B cell (primary cell): ENCODE measurements at regions of chr21 and their contacts with region 1.

Region 1: GRCh38 chr21:36297921-36298594 is 21.9 kb upstream of the MORC3 start:
- DNase-seq: peak; percentile 92
- ATAC-seq: peak; percentile 88
- H3K4me3 ChIP-seq: peak overlapping the region in 4 of 5 experiments; percentile 5 to 53 (median 29)
- H3K4me3 Mint-ChIP-seq: peak overlapping the region; percentile 80
- H3K27ac ChIP-seq: peak overlapping the region; percentile 94 to 97
- H3K27ac Mint-ChIP-seq: peak overlapping the region; percentile 97
- H3K4me1 ChIP-seq: peaks cover 52 to 71% of the 10 kb centered on the region in 2 donors
- H3K4me1 Mint-ChIP-seq: peaks cover 53% of the 10 kb centered on the region
- H3K27me3 ChIP-seq: no peaks in the 10 kb centered on the region
- H3K27me3 Mint-ChIP-seq: no peaks in the 10 kb centered on the region
- CTCF ChIP-seq: no peak

Region 2: DNA sequence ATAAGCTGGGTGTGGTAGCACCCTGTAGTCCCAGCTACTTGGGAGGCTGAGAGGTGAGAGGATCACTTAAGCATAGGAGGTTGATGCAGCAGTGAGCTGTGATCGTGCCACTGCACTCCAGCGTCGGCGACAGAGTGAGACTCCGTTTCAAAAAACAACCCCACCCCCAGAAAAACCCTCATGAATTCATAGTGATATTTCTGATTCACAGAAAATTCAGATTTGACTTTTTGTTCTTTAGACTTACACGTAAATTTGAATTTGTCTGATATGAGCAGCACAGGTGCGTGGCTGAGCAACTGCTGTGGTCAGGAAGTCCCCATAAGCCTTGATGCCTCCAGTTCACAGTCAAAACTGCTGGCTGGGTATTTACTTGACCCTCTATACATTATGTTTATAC is 12.0 kb after region 1 on chr21:
- CTCF ChIA-PET with region 1: interaction called, 16 read pairs
- POLR2A ChIA-PET with region 1: interaction called, 50 read pairs
- intact Hi-C with region 1: loop called (anchors 1 kb)
- DNase-seq: peak; percentile 78
- ATAC-seq: peak; percentile 89
- H3K4me3 ChIP-seq: peak overlapping the region in 3 of 5 experiments; percentile 2 to 25 (median 7)
- H3K4me3 Mint-ChIP-seq: peak overlapping the region; percentile 72
- H3K27ac ChIP-seq: peak overlapping the region; percentile 53 to 86
- H3K27ac Mint-ChIP-seq: peak overlapping the region; percentile 93
- H3K4me1 ChIP-seq: peaks cover 22 to 33% of the 10 kb centered on the region in 2 donors
- H3K4me1 Mint-ChIP-seq: peaks cover 28% of the 10 kb centered on the region
- H3K27me3 ChIP-seq: no peaks in the 10 kb centered on the region
- H3K27me3 Mint-ChIP-seq: no peaks in the 10 kb centered on the region
- CTCF ChIP-seq: no peak